Posterior vena cava (tissue), 2 donors: ENCODE measurements at regions of chr1 and their contacts with region 1.

Region 1: DNA sequence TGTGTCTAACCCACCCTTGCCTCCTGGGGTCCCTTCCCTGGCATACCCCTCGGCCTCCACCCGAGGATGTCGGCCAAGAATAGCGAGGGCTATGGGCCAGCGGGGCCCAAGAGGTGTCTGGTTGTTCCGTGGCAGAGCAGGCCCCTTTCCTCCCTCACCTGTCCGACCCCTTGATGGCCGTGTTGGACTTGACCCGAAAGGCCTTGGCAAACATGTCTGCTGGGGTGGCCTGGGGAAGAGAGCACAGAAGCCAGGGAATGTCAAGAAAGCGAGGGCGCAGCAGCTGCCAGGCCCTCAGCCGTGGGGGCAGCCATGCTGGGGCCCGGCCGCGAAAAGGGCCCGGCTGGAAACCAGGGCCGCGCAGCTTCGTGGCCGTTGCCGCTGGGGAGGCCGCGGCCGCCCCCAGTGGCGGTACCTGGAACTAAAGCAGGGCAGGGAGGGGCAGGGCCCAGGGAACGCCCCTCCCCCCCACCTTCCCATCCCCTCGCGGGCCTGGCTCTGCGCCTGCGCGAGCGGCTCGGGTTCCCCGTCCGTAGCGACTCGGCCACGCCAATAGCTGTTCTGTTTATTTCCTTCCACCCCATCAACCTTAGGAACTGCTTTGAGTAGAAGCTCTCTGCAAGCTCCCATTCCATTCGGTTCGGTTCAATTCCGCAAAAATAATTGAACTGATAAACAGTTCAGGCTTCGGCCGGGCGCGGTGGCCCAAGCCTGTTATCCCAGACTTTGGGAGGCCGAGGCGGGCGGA is at the start of gene EIF2D:
- DNase-seq: peak; percentile 98
- total RNA-seq, gene EIF2D: 32.4 to 34.3 TPM

Region 2: GRCh38 chr1:206563367-206564207 is 48.7 kb before region 1 on chr1:
- intact Hi-C with region 1: loop called in 1 of 2 experiments (anchors 1 kb)
- DNase-seq: no peak